Naive thymus-derived CD8-positive, alpha-beta T cell (primary cell): ENCODE measurements at regions of chr15 and their contacts with region 1.

Region 1: GRCh38 chr15:31435261-31435911 is 108.8 kb downstream of the KLF13 start:
- DNase-seq: peak; percentile 49 to 94 (median 86)
- ATAC-seq: peak; percentile 73 to 78
- H3K4me3 Mint-ChIP-seq: peak overlapping the region; percentile 77 to 91 (median 84)
- H3K27ac Mint-ChIP-seq: peak overlapping the region; percentile 93 to 100 (median 100)
- H3K4me1 Mint-ChIP-seq: peaks cover 45 to 89% (median 79%) of the 10 kb centered on the region in 4 donors
- H3K27me3 Mint-ChIP-seq: no peaks in the 10 kb centered on the region

Region 2: GRCh38 chr15:29568838-29569532 is 1866.4 kb before region 1 on chr15:
- POLR2A ChIA-PET with region 1: no interaction called
- DNase-seq: no peak
- ATAC-seq: no peak
- H3K4me3 Mint-ChIP-seq: peak overlapping the region in 7 of 10 donors; percentile 8 to 78 (median 58)
- H3K27ac Mint-ChIP-seq: peak overlapping the region in 1 of 10 donors; percentile 30
- H3K4me1 Mint-ChIP-seq: peaks cover 5 to 13% (median 7%) of the 10 kb centered on the region in 4 donors
- H3K27me3 Mint-ChIP-seq: peaks cover 43 to 72% (median 59%) of the 10 kb centered on the region in 5 donors

Region 3: DNA sequence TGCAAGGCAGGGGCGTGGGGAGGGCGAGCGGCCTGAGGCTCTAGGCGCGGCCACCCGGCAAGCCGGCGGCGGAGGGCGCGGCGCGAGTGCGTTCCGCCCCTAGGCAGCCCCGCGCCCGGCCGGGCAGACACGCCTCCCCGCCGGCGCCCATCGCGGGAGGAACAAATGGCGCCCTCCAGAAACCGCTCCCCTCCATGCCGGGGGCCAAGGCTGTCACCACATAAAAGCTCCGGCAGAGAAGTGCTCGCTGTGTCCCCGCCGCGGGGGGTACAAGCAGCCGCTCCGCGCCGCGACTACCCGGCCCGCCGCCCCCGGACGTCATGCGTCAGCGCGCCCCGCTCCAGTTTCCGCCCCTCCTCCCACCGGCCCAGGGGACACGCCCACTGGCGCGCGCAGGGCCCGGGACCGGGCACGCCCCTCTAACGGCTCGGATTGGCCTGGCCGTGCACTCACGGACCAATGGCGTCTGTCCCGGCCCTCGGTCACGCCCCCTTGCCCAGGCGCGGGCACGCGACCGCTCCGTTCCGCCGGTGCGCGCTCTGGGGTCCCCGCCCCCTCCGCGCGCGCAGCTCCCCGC is 109.1 kb before region 1 on chr15:
- POLR2A ChIA-PET with region 1: interaction called, 57 read pairs
- DNase-seq: peak; percentile 98 to 100 (median 100)
- ATAC-seq: peak; percentile 65 to 73
- H3K4me3 Mint-ChIP-seq: peak overlapping the region; percentile 50 to 91 (median 73)
- H3K27ac Mint-ChIP-seq: peak overlapping the region in 9 of 10 donors; percentile 35 to 97 (median 86)
- H3K4me1 Mint-ChIP-seq: peaks cover 33 to 73% (median 65%) of the 10 kb centered on the region in 4 donors
- H3K27me3 Mint-ChIP-seq: no peaks in the 10 kb centered on the region

Region 4: DNA sequence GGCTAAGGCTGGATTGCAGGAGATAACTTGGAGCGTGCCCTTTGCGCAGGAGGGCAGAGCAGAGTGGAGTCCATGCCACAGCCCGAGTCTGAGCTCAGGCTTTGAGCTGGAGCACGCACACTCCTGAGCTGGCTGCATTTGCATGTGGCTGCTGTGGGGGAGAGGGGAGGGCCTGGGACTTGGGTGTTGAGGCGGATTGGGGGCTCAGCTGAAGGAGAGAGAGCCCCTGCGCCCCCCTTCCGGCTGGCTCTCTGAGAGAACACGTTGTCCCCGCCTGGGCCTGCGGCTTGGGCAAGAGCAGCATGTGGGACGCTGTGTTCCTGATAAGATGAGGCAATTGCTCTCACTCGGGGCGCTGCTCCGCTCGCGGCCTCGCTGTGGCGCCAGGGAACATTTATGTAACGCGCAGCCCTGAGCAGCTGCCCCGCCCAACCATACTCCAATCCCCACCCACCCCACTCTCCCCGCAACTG is 69.7 kb before region 1 on chr15:
- POLR2A ChIA-PET with region 1: interaction called, 181 read pairs
- DNase-seq: peak; percentile 66 to 92 (median 82)
- ATAC-seq: peak; percentile 48 to 61
- H3K4me3 Mint-ChIP-seq: peak overlapping the region; percentile 79 to 95 (median 88)
- H3K27ac Mint-ChIP-seq: peak overlapping the region; percentile 96 to 100 (median 98)
- H3K4me1 Mint-ChIP-seq: peaks cover 59 to 100% (median 99%) of the 10 kb centered on the region in 4 donors
- H3K27me3 Mint-ChIP-seq: no peaks in the 10 kb centered on the region

Region 5: GRCh38 chr15:31396881-31397560 is 38.4 kb before region 1 on chr15:
- POLR2A ChIA-PET with region 1: interaction called, 143 read pairs
- DNase-seq: no peak
- ATAC-seq: no peak
- H3K4me3 Mint-ChIP-seq: peak overlapping the region in 1 of 10 donors; percentile 54
- H3K27ac Mint-ChIP-seq: peak overlapping the region in 3 of 10 donors; percentile 72 to 75 (median 73)
- H3K4me1 Mint-ChIP-seq: peaks cover 21 to 61% (median 58%) of the 10 kb centered on the region in 4 donors
- H3K27me3 Mint-ChIP-seq: no peaks in the 10 kb centered on the region

Region 6: DNA sequence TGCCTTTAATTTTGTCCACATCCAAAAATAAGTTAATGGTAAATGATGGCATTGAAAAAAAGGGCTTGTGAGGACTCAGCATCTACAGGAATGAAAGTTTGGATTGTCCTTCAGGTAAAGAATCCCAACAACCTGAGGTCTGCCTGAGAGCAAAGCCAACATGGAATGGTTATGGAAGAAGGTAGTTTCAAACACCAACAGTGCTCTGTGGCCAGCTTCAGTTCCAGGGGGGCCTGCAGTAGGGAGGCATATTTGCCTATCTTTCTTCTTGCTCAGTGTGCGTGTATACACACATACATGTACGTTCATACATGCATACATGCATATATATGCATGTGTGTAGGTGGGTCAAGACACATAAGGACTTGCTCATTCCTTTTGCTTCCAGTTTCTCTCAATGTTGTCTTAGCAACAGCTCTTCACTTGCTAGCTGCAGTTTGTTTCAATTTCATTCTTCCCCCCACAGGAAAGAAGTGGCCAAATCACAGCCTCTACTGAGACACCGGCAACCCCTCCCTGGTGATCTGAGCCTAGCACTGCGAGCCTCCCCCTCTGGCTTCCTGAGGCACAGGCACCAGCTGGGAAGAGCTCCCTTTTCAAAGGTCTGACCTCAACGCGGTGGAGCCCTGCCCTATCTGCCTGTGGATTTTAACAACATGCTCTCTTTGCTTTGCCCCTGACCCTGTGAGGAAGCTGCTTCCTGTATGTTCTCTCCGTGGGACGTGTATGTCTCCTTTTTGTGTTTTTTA is 37.4 kb after region 1 on chr15:
- POLR2A ChIA-PET with region 1: interaction called, 50 read pairs
- DNase-seq: peak in 9 of 10 donors; percentile 27 to 75 (median 57)
- ATAC-seq: peak; percentile 84 to 87
- H3K4me3 Mint-ChIP-seq: peak overlapping the region; percentile 66 to 88 (median 81)
- H3K27ac Mint-ChIP-seq: peak overlapping the region; percentile 84 to 97 (median 95)
- H3K4me1 Mint-ChIP-seq: peaks cover 30 to 79% (median 63%) of the 10 kb centered on the region in 4 donors
- H3K27me3 Mint-ChIP-seq: no peaks in the 10 kb centered on the region